Endothelial cell of umbilical vein (primary cell): ENCODE measurements at regions of chr2 and their contacts with region 1.

Region 1: GRCh38 chr2:25276569-25277465 is 64.9 kb downstream of the DNMT3A start:
- DNase-seq: peak; percentile 61
- H3K4me3 ChIP-seq: peak overlapping the region in 1 of 3 experiments; percentile 9
- H3K27ac ChIP-seq: peak overlapping the region; percentile 25
- H3K4me1 ChIP-seq: peaks cover 15% of the 10 kb centered on the region
- H3K27me3 ChIP-seq: no peaks in the 10 kb centered on the region
- CTCF ChIP-seq: peak; percentile 83 to 91
- POLR2A ChIP-seq: no peak

Region 2: GRCh38 chr2:24111407-24111901 is 1165.4 kb before region 1 on chr2:
- CTCF ChIA-PET with region 1: no interaction called
- POLR2A ChIA-PET with region 1: no interaction called
- dilution Hi-C with region 1: no loop called
- intact Hi-C with region 1: no loop called
- DNase-seq: no peak
- H3K4me3 ChIP-seq: no peak overlapping the region
- H3K27ac ChIP-seq: no peak overlapping the region
- H3K4me1 ChIP-seq: no peaks in the 10 kb centered on the region
- H3K27me3 ChIP-seq: peaks cover 0 to 2% of the 10 kb centered on the region in 2 experiments
- CTCF ChIP-seq: no peak
- POLR2A ChIP-seq: no peak

Region 3: GRCh38 chr2:24682304-24682703 is 594.5 kb before region 1 on chr2:
- CTCF ChIA-PET with region 1: no interaction called
- POLR2A ChIA-PET with region 1: no interaction called
- dilution Hi-C with region 1: no loop called
- intact Hi-C with region 1: no loop called
- DNase-seq: peak; percentile 17
- H3K4me3 ChIP-seq: no peak overlapping the region
- H3K27ac ChIP-seq: no peak overlapping the region
- H3K4me1 ChIP-seq: peaks cover 3% of the 10 kb centered on the region
- H3K27me3 ChIP-seq: no peaks in the 10 kb centered on the region
- CTCF ChIP-seq: no peak
- POLR2A ChIP-seq: no peak

Region 4: GRCh38 chr2:25294573-25295462 is 18.0 kb after region 1 on chr2:
- CTCF ChIA-PET with region 1: interaction called, 59 read pairs
- POLR2A ChIA-PET with region 1: no interaction called
- dilution Hi-C with region 1: no loop called
- intact Hi-C with region 1: loop called (anchors 2 kb)
- DNase-seq: peak; percentile 81
- H3K4me3 ChIP-seq: no peak overlapping the region
- H3K27ac ChIP-seq: peak overlapping the region; percentile 68
- H3K4me1 ChIP-seq: peaks cover 38% of the 10 kb centered on the region
- H3K27me3 ChIP-seq: no peaks in the 10 kb centered on the region
- CTCF ChIP-seq: no peak
- POLR2A ChIP-seq: peak; percentile 76

Region 5: DNA sequence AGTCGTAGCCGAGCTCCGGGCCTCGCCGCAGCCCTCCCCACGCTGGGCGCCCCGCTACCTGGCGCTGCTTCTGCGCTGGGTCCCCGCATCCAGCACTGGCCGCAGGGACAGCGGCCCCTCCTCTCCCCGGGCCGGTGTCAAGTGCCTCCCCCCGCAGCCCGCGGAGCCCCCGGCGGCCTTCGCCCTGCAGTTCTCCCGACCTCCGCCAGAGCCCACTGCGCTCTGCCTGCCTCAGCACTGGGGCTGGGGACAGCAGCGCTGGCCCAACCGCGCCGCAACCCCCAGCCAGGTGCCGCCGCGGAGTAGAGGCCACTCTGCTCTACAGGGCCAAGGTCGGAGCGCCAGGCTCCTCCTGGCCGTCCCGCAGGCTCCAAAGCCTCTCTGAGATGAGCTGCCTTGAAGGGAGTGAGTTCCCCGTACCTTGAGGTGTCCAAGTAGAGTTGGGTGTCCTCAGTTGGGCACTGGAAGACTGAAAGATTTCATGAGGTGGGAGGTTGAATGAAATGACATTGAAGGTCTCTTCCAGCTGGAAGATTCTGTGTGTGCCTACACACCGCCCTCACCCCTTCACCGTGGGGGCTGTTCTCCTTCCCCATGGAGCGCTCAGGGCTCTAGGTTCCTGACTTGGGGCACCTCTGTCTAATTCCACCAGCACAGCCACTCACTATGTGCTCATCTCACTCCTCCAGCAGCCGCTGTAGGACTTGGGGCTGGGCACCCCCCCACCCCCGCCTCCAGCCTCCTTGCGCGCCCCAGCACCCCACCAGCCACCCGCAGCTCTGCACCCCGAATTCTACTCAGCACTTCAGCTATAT is 65.8 kb after region 1 on chr2:
- CTCF ChIA-PET with region 1: no interaction called
- POLR2A ChIA-PET with region 1: no interaction called
- dilution Hi-C with region 1: no loop called
- intact Hi-C with region 1: loop called (anchors 1 kb)
- DNase-seq: peak; percentile 88
- H3K4me3 ChIP-seq: peak overlapping the region in 2 of 3 experiments; percentile 29 to 58
- H3K27ac ChIP-seq: no peak overlapping the region
- H3K4me1 ChIP-seq: no peaks in the 10 kb centered on the region
- H3K27me3 ChIP-seq: peaks cover 0 to 5% of the 10 kb centered on the region in 2 experiments
- CTCF ChIP-seq: peak; percentile 93 to 95
- POLR2A ChIP-seq: no peak

Region 6: GRCh38 chr2:25376750-25377621 is 100.2 kb after region 1 on chr2:
- CTCF ChIA-PET with region 1: interaction called, 4 read pairs
- POLR2A ChIA-PET with region 1: no interaction called
- dilution Hi-C with region 1: no loop called
- intact Hi-C with region 1: loop called (anchors 1 kb)
- DNase-seq: peak; percentile 82
- H3K4me3 ChIP-seq: peak overlapping the region in 1 of 3 experiments; percentile 13
- H3K27ac ChIP-seq: no peak overlapping the region
- H3K4me1 ChIP-seq: peaks cover 11% of the 10 kb centered on the region
- H3K27me3 ChIP-seq: no peaks in the 10 kb centered on the region
- CTCF ChIP-seq: peak; percentile 86 to 99
- POLR2A ChIP-seq: no peak

Region 7: DNA sequence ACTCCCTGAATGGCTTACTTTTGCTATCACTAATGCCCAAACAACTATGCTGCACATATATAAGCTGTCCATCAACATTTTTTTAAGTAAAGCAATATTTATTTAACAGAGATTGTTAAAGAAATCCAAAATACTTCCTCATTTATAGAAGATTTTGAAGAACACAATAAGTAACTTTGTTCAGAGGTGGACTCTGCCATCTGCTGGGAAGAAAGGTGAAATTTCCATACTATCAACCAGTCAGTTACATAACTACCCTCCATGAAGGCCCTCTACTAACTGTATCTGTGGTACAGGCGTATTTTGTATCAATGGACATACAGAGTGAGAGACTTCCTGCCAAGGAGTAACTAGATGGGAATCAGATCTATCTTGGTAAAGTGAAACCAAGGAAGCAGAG is 290.6 kb after region 1 on chr2:
- CTCF ChIA-PET with region 1: interaction called, 4 read pairs
- POLR2A ChIA-PET with region 1: no interaction called
- dilution Hi-C with region 1: no loop called
- intact Hi-C with region 1: loop called (anchors 10 kb)
- DNase-seq: peak; percentile 67
- H3K4me3 ChIP-seq: no peak overlapping the region
- H3K27ac ChIP-seq: no peak overlapping the region
- H3K4me1 ChIP-seq: peaks cover 19% of the 10 kb centered on the region
- H3K27me3 ChIP-seq: no peaks in the 10 kb centered on the region
- CTCF ChIP-seq: peak; percentile 18 to 31
- POLR2A ChIP-seq: no peak